Activated CD8-positive, alpha-beta T cell treated with anti-CD3 and anti-CD28 coated beads for 36 hours (primary cell): ENCODE measurements at regions of chr3 and their contacts with region 1.

Region 1: DNA sequence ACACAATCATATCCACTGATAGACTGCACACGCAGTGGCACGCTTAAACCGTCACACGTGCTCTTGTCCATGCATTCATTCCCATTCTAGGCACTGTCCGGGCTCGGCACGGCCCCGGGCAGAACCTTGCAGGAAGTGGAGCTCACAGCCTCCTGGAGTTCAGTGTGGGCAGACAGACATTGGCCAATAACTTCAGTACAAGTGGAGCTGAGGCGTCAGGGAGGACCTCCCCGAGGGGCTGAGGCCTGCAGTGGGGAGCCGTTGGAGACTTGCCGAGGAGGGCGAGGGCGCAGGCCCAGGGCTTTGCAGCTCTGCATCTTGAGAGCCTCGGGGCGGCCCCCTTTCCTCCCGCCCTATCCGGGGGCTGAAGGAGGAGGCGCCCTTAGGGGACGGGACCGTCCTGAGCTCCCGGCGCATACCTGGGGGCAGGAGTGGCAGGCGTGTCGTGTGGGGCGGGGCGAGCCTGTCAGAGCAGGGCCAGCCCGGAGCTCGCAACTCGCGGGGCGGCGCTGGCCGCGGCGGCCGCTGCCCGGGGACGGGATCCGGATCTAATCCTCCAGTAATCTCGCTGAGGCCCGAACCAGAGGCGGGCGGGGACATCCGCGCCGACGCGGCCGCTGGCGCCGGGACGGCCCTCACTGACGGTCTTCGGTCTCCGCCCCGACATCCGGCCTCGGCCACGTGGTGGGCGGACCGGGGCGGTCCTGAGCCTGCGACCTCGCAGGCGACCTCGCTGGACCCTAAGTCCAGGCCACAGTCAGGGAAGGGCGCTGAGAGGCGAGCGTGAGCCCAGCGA is at the start of gene ACY1:
- DNase-seq: peak; percentile 92
- ATAC-seq: peak; percentile 91
- H3K4me3 Mint-ChIP-seq: peak within 1 kb of the TSS; percentile 92
- H3K27ac Mint-ChIP-seq: peak within 1 kb of the TSS; percentile 95
- H3K4me1 Mint-ChIP-seq: peaks cover 21% of the 10 kb centered on the region
- H3K27me3 Mint-ChIP-seq: no peaks in the 10 kb centered on the region
- CTCF ChIP-seq: peak; percentile 60
- total RNA-seq, gene ACY1: 61.8 to 64.5 TPM

Region 2: GRCh38 chr3:51995346-51996163 is 12.6 kb after region 1 on chr3 and contains the start of gene RPL29:
- CTCF ChIA-PET with region 1: interaction called, 23 read pairs
- POLR2A ChIA-PET with region 1: interaction called, 267 read pairs
- intact Hi-C with region 1: no loop called
- DNase-seq: peak; percentile 94
- ATAC-seq: peak; percentile 96
- H3K4me3 Mint-ChIP-seq: peak within 1 kb of the TSS; percentile 99
- H3K27ac Mint-ChIP-seq: peak within 1 kb of the TSS; percentile 100
- H3K4me1 Mint-ChIP-seq: peaks cover 33% of the 10 kb centered on the region
- H3K27me3 Mint-ChIP-seq: no peaks in the 10 kb centered on the region
- CTCF ChIP-seq: no peak
- total RNA-seq, gene RPL29: 2,039 to 2,045 TPM

Region 3: GRCh38 chr3:52181543-52181942 is 198.6 kb after region 1 on chr3:
- CTCF ChIA-PET with region 1: no interaction called
- POLR2A ChIA-PET with region 1: no interaction called
- intact Hi-C with region 1: no loop called
- DNase-seq: no peak
- ATAC-seq: no peak
- H3K4me3 Mint-ChIP-seq: no peak overlapping the region
- H3K27ac Mint-ChIP-seq: no peak overlapping the region
- H3K4me1 Mint-ChIP-seq: no peaks in the 10 kb centered on the region
- H3K27me3 Mint-ChIP-seq: no peaks in the 10 kb centered on the region
- CTCF ChIP-seq: no peak